Right cardiac atrium (tissue), 5 donors: ENCODE measurements at regions of chr17 and their contacts with region 1.

Region 1: DNA sequence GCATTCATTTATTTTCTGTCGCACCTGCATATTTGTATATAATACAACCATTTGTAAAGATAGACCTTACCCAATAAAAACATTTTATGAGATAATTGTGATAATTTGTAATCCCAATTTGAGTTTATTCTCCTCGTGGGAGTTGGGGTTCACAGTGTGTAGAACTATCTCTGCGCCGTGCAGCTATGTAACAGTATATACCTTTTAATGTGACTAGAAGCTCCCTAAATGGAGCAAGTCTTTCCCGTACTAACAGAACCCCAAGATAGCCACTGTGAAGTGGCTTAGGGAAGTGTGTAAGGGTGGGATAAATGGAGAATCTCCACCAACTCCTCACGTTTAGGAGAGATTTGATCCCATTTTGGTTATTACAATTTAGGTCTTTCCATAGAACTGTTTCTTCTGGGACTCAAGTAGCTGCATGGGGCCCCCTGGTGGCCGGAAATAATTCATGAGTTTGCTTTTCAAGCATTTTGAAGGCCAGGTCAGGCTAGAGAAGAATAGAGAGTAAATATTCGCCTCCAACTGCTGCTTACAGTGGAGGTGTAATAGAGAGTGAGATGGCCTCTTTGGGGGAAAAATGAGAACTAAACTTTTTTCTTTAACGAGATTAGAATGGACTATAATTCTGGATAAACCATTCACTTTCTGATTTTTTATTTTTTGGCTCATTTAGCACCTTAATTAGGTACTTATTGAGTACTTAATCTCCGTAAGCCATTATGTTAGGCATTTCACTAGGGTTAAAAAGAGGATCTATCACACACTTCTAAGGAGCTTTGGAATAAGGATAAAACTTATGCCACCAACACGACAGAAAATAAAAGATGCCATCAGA is 4.5 kb downstream of the TMEM100 start:
- DNase-seq: peak; percentile 79 to 92 (median 79)
- ATAC-seq: peak; percentile 38 to 48
- H3K4me3 ChIP-seq: no peak overlapping the region
- H3K27ac ChIP-seq: no peak overlapping the region
- H3K4me1 ChIP-seq: no peaks in the 10 kb centered on the region
- H3K27me3 ChIP-seq: no peaks in the 10 kb centered on the region

Region 2: GRCh38 chr17:55567240-55568214 is 150.6 kb before region 1 on chr17:
- intact Hi-C with region 1: no loop called
- DNase-seq: peak; percentile 81 to 92 (median 88)
- ATAC-seq: peak; percentile 83 to 89
- H3K4me3 ChIP-seq: no peak overlapping the region
- H3K27ac ChIP-seq: peak overlapping the region; percentile 73
- H3K4me1 ChIP-seq: peaks cover 5% of the 10 kb centered on the region
- H3K27me3 ChIP-seq: no peaks in the 10 kb centered on the region

Region 3: GRCh38 chr17:55607731-55608341 is 110.3 kb before region 1 on chr17:
- intact Hi-C with region 1: no loop called
- DNase-seq: peak; percentile 73 to 94 (median 74)
- ATAC-seq: peak; percentile 80 to 84
- H3K4me3 ChIP-seq: no peak overlapping the region
- H3K27ac ChIP-seq: no peak overlapping the region
- H3K4me1 ChIP-seq: peaks cover 3% of the 10 kb centered on the region
- H3K27me3 ChIP-seq: no peaks in the 10 kb centered on the region

Region 4: GRCh38 chr17:55770148-55770870 is 52.2 kb after region 1 on chr17:
- intact Hi-C with region 1: loop called in 1 of 4 experiments (anchors 5 kb)
- DNase-seq: no peak
- ATAC-seq: peak; percentile 73 to 81
- H3K4me3 ChIP-seq: no peak overlapping the region
- H3K27ac ChIP-seq: no peak overlapping the region
- H3K4me1 ChIP-seq: peaks cover 7% of the 10 kb centered on the region
- H3K27me3 ChIP-seq: no peaks in the 10 kb centered on the region

Region 5: GRCh38 chr17:55865072-55865762 is 147.1 kb after region 1 on chr17:
- intact Hi-C with region 1: no loop called
- DNase-seq: no peak
- ATAC-seq: no peak
- H3K4me3 ChIP-seq: no peak overlapping the region
- H3K27ac ChIP-seq: no peak overlapping the region
- H3K4me1 ChIP-seq: no peaks in the 10 kb centered on the region
- H3K27me3 ChIP-seq: no peaks in the 10 kb centered on the region